ENCODE measurements at regions of chr20 and their contacts with region 1.

Region 1: DNA sequence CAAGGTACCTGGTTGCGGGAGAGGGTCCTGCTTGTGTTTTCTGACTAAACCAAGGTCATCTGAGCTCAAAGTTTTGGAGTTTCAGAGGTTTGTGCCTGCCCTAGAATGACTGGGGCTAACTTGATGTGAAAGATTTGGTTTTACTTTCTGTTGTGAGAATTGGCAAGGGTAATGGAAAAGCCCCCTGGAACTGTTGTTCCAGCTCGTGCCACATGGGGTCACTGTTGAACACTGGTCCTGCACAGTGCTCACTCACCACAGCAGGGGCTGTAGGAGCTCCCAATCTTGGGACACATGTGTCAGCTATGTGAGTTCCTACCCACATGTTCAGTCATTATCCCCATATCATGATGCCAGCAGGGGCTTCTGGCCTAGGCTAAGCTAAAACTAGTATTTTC is 6.5 kb downstream of the TGM6 start:
- H3K4me3 ChIP-seq: no peak overlapping the region
- H3K27ac ChIP-seq: no peak overlapping the region
- H3K4me1 ChIP-seq: no peaks in the 10 kb centered on the region
- CTCF ChIP-seq: no peak

Region 2: GRCh38 chr20:2206957-2207769 is 180.0 kb before region 1 on chr20:
- CTCF ChIA-PET with region 1: interaction called, 35 read pairs
- POLR2A ChIA-PET with region 1: interaction called, 3 read pairs
- H3K4me3 ChIP-seq: peak overlapping the region; percentile 52
- H3K27ac ChIP-seq: peak overlapping the region; percentile 60; the same call in 1 of the 2 replicates
- H3K4me1 ChIP-seq: 0 out of 2 replicates have a peak, but pooled peaks cover 2% of the 10 kb centered on the region
- CTCF ChIP-seq: peak; percentile 92

Region 3: DNA sequence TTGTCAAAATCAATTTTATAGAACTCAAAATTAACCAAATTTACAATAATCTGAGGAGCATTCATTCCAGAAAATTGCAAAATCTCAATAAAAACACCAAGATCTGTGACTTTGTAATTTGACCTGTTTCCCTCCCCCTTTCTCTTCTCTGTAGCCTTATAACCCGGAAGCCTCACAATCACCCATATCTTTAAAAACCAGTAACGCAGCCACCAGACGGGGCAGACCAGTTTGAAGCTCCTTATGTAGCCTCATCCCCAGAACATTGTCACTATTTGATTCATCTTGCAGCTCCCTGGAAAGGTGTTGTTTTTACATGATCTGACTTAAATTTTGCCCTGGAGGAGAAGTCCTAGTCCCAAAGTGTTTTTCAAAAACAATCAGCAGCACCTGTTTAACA is 33.9 kb before region 1 on chr20:
- CTCF ChIA-PET with region 1: no interaction called
- POLR2A ChIA-PET with region 1: no interaction called
- H3K4me3 ChIP-seq: no peak overlapping the region
- H3K27ac ChIP-seq: no peak overlapping the region
- H3K4me1 ChIP-seq: no peaks in the 10 kb centered on the region
- CTCF ChIP-seq: no peak

Region 4: DNA sequence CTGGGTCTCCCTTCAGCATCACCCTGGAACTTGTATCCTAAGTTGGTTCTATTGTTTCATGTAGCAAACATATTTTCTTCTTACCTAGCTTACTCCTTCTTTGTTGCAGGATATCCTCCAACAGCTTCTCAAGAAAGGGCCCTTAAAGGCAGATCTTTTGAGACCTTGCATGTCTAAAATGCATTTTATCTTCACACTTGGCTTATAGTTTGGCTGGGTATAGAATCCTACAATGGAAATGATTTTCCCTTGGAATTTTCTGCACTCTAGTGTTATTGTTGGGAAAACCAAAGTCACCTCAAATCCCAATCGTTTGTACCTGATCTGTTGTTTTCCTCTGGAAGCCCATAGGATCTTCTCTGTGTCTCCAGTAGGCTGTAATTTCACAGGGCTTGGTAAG is 18.6 kb before region 1 on chr20:
- CTCF ChIA-PET with region 1: interaction called, 35 read pairs
- POLR2A ChIA-PET with region 1: no interaction called
- H3K4me3 ChIP-seq: no peak overlapping the region
- H3K27ac ChIP-seq: no peak overlapping the region
- H3K4me1 ChIP-seq: no peaks in the 10 kb centered on the region
- CTCF ChIP-seq: no peak

Region 5: GRCh38 chr20:2374346-2375125 is 12.6 kb before region 1 on chr20:
- CTCF ChIA-PET with region 1: interaction called, 35 read pairs
- POLR2A ChIA-PET with region 1: no interaction called
- H3K4me3 ChIP-seq: no peak overlapping the region
- H3K27ac ChIP-seq: no peak overlapping the region
- H3K4me1 ChIP-seq: no peaks in the 10 kb centered on the region
- CTCF ChIP-seq: no peak

Region 6: GRCh38 chr20:2402271-2402980 is 15.2 kb after region 1 on chr20:
- CTCF ChIA-PET with region 1: interaction called, 58 read pairs
- POLR2A ChIA-PET with region 1: no interaction called
- H3K4me3 ChIP-seq: no peak overlapping the region
- H3K27ac ChIP-seq: no peak overlapping the region
- H3K4me1 ChIP-seq: no peaks in the 10 kb centered on the region
- CTCF ChIP-seq: peak; percentile 45; the same call in 1 of the 2 replicates

Region 7: GRCh38 chr20:2421247-2421646 is 34.1 kb after region 1 on chr20:
- CTCF ChIA-PET with region 1: interaction called, 11 read pairs
- POLR2A ChIA-PET with region 1: interaction called, 7 read pairs
- H3K4me3 ChIP-seq: no peak overlapping the region
- H3K27ac ChIP-seq: no peak overlapping the region
- H3K4me1 ChIP-seq: 0 out of 2 replicates have a peak, but pooled peaks cover 2% of the 10 kb centered on the region
- CTCF ChIP-seq: no peak